T-cell (primary cell): ENCODE measurements at regions of chr5 and their contacts with region 1.

Region 1: DNA sequence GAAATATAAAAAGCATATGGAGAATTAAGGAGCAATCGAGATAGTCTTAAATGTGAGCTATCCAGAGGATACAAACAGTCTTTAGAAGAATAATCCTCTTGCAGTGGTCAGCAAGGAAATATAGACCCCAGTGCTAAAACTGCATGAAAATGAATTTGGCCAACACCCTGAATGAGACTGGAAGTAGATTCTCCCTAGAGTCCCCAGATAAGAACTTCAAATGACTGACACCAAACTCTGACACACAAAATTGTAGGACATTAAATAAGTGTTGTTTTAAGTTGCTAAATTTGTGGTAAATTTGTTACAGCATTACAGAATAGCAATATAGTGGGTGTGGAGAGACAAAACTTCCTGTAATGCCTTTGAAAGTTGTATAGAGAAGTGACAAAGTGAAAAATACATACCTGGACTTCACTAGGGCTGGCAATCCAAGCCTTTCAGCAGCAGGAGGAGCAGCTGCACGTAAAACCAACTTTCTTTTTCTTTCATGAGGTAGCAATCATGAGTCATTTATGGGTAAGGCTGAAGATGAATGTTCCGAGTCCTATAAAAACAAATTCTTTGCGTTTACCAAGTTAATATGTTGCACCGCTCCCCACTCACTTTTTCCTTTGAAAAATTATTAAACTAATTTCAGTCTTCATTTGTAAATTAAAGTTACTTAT is 1138.1 kb downstream of the TAF11L14 start:
- DNase-seq: peak in 1 of 35 experiments; percentile 21
- ATAC-seq: peak in 2 of 4 experiments; percentile 46 to 53
- H3K4me3 ChIP-seq: no peak overlapping the region
- H3K4me3 Mint-ChIP-seq: no peak overlapping the region
- H3K27ac ChIP-seq: no peak overlapping the region
- H3K27ac Mint-ChIP-seq: no peak overlapping the region
- H3K4me1 ChIP-seq: no peaks in the 10 kb centered on the region
- H3K4me1 Mint-ChIP-seq: peaks cover 4 to 13% (median 6%) of the 10 kb centered on the region in 3 donors
- H3K27me3 ChIP-seq: no peaks in the 10 kb centered on the region
- H3K27me3 Mint-ChIP-seq: peaks cover 2 to 4% of the 10 kb centered on the region in 2 donors

Region 2: GRCh38 chr5:18195910-18196309 is 576.4 kb before region 1 on chr5:
- CTCF ChIA-PET with region 1: no interaction called
- POLR2A ChIA-PET with region 1: interaction called in 1 of 2 experiments, 13 read pairs
- DNase-seq: no peak
- ATAC-seq: no peak
- H3K4me3 ChIP-seq: no peak overlapping the region
- H3K4me3 Mint-ChIP-seq: no peak overlapping the region
- H3K27ac ChIP-seq: no peak overlapping the region
- H3K27ac Mint-ChIP-seq: no peak overlapping the region
- H3K4me1 ChIP-seq: no peaks in the 10 kb centered on the region
- H3K4me1 Mint-ChIP-seq: no peaks in the 10 kb centered on the region
- H3K27me3 ChIP-seq: no peaks in the 10 kb centered on the region
- H3K27me3 Mint-ChIP-seq: no peaks in the 10 kb centered on the region